WTC11 (cell line): ENCODE measurements at regions of chr10 and their contacts with region 1.

Region 1: DNA sequence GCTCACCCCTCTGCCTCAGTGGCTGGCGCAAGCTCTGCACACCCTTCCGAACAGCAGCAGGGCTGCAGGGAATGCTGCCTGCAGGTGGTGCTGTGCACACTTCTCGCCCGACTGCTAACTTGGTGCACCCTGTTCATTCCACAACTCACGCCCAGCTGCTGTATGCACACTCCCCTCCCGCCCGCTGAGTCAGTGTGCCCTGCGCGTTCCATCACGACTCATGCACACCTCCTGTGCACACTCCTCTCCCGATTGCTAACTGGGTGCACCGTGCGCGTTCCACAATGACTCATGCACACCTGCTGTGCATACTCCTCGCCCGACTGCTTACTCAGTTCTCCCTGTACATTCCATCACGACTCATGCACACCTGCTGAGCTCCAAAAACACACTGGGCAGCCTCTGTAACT is 21.5 kb downstream of the ADARB2 start:
- DNase-seq: peak; percentile 60
- ATAC-seq: peak; percentile 90
- H3K4me3 Mint-ChIP-seq: peak overlapping the region; percentile 46
- H3K27ac Mint-ChIP-seq: no peak overlapping the region
- H3K4me1 Mint-ChIP-seq: peaks cover 21% of the 10 kb centered on the region
- H3K27me3 Mint-ChIP-seq: peaks cover 2% of the 10 kb centered on the region
- CTCF ChIP-seq: peak; percentile 30; the same call in 1 of the 2 replicates

Region 2: GRCh38 chr10:1737222-1738061 is 21.6 kb after region 1 on chr10 and contains the start of gene ADARB2:
- CTCF ChIA-PET with region 1: interaction called, 22 read pairs
- POLR2A ChIA-PET with region 1: interaction called, 4 read pairs
- DNase-seq: peak; percentile 83
- ATAC-seq: peak; percentile 88
- H3K4me3 Mint-ChIP-seq: peak within 1 kb of the TSS; percentile 79
- H3K27ac Mint-ChIP-seq: no peak within 1 kb of the TSS
- H3K4me1 Mint-ChIP-seq: peaks cover 30% of the 10 kb centered on the region
- H3K27me3 Mint-ChIP-seq: peaks cover 65% of the 10 kb centered on the region
- CTCF ChIP-seq: no peak
- total RNA-seq, gene ADARB2: 3.3 to 4.9 TPM (median 3.7 TPM) in 3 replicates